Aorta (tissue), 5 donors: ENCODE measurements at regions of chr19 and their contacts with region 1.

Region 1: GRCh38 chr19:11374433-11375142 is at the start of gene SWSAP1:
- DNase-seq: peak; percentile 99
- ATAC-seq: peak; percentile 98
- H3K4me3 ChIP-seq: peak within 1 kb of the TSS in 1 of 2 donors; percentile 55
- H3K27ac ChIP-seq: peak within 1 kb of the TSS; percentile 72 to 88
- H3K4me1 ChIP-seq: peaks cover 2 to 4% of the 10 kb centered on the region in 2 donors
- H3K27me3 ChIP-seq: no peaks in the 10 kb centered on the region
- total RNA-seq, gene SWSAP1: 1.5 to 1.7 TPM

Region 2: DNA sequence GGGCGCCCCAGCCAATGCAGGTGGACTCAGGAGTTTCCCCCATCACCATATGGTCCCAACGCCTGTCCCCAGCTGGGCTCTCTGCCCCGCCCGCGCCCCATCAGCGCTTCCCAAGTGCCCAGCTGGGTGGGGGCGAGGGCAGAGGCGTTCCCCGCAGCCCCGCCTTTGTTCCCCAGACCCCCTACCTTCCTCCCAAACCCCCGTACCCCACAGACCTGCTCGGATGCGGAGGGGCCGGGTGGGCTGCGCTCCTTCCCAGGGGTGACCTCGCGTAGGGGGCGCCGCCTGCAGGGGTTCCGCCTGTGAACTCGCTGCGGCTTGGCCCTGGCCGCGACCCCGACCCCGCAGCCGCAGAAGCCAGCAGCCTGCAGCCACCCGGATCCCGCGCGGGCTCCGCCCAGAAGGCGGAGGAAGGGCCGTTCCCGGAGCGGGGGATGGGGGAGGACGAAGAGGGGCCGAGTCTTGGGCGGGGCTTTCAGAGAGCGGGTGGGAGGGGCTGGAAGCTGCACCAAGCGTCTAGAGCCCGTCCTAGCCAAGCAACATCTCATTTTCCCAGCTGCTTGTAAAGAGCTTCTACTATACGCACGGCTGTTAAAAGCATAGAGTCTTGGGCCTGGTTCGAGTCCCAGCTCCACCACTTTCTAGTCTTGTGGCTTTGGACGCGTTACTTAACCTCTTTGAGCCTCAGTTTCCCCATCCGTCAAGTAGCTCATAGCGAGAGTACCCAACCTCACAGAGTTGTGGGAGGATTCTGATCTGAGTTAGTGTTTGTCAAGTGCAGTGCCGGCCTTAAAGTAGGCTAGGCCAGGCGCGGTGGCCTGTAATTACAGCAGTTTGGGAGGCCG is 35.1 kb before region 1 on chr19 and contains the start of gene RAB3D:
- intact Hi-C with region 1: loop called in 1 of 2 experiments (anchors 5 kb)
- DNase-seq: peak; percentile 96 to 97
- ATAC-seq: peak; percentile 93
- H3K4me3 ChIP-seq: peak within 1 kb of the TSS; percentile 58 to 72
- H3K27ac ChIP-seq: peak within 1 kb of the TSS in 1 of 2 donors; percentile 7
- H3K4me1 ChIP-seq: no peaks in the 10 kb centered on the region
- H3K27me3 ChIP-seq: no peaks in the 10 kb centered on the region
- total RNA-seq, gene RAB3D: 26.7 to 32.7 TPM

Region 3: DNA sequence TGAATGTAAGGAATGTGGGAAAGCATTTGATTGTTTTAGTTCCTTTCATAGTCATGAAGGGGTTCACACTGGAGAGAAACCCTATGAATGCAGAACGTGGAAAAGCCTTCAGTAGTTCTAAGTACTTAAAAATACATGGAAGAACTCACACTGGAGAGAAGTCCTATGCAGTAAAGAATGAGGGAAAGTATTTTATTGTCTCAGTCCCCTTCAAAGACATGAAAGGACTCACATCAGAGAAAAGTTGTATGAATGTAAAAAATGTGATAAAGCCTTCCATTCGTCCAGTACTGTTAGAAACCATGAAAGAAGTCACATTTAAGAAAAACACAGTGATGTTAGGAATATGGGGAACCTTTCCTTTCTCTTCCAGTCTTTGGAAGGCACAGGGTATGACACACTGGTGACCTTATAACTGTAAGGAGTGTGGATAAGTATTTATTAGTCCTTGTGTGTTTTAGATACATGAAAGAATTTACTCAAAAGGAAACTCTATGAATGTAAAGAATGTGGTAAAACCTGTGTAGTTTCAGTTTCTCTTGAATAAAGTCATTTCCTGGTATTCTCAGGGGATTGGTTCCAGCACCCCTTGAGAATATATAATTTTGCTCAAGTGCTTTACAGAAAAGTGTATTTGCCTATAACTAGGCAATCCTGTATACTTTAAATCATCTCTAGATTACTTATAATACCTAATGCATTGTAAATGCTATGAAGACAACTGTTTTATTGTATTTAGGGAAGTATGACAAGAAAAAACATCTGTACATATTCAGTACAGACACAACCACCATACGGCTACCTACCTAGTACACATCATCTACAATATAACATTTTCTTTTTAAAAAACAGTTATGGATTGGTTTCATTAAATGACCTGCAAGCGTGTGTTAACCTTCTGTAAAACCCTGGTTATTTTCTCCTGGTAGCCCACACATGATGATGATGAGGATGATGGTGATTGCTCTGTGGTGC is 311.4 kb after region 1 on chr19:
- intact Hi-C with region 1: no loop called
- DNase-seq: no peak
- ATAC-seq: no peak
- H3K4me3 ChIP-seq: no peak overlapping the region
- H3K27ac ChIP-seq: no peak overlapping the region
- H3K4me1 ChIP-seq: no peaks in the 10 kb centered on the region
- H3K27me3 ChIP-seq: no peaks in the 10 kb centered on the region